Ovary (tissue), 10 donors: ENCODE measurements at regions of chr9 and their contacts with region 1.

Region 1: GRCh38 chr9:13467157-13467556 is 187.7 kb upstream of the MPDZ start:
- DNase-seq: no peak
- H3K4me3 ChIP-seq: no peak overlapping the region
- H3K27ac ChIP-seq: no peak overlapping the region
- H3K4me1 ChIP-seq: peaks cover 1% of the 10 kb centered on the region
- H3K27me3 ChIP-seq: no peaks in the 10 kb centered on the region
- CTCF ChIP-seq: no peak
- EP300 ChIP-seq: no peak
- POLR2A ChIP-seq: no peak

Region 2: GRCh38 chr9:12993466-12993865 is 473.7 kb before region 1 on chr9:
- intact Hi-C with region 1: no loop called
- DNase-seq: no peak
- H3K4me3 ChIP-seq: no peak overlapping the region
- H3K27ac ChIP-seq: no peak overlapping the region
- H3K4me1 ChIP-seq: no peaks in the 10 kb centered on the region
- H3K27me3 ChIP-seq: no peaks in the 10 kb centered on the region
- CTCF ChIP-seq: no peak
- EP300 ChIP-seq: no peak
- POLR2A ChIP-seq: no peak

Region 3: DNA sequence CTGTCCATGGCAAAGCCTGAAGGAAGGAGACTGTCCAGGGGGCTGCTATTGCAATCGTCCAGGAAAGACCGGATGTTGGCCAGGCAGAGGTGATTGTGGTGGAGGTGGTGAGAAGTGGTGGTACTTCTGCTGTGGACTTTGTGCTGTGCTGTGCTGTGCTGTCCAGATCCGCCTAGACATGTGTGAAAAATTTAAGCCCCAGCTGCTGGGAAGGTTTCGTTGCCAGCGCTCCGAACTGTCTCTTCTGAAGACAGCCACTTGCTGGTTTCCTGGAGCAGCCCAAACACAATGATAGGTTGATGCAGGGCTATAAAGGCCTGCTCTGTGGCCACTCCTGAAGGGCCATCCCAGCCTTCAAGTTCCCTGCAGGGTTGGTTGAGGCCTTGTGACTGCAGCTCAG is 35.3 kb after region 1 on chr9:
- intact Hi-C with region 1: no loop called
- DNase-seq: no peak
- H3K4me3 ChIP-seq: no peak overlapping the region
- H3K27ac ChIP-seq: no peak overlapping the region
- H3K4me1 ChIP-seq: no peaks in the 10 kb centered on the region
- H3K27me3 ChIP-seq: no peaks in the 10 kb centered on the region
- CTCF ChIP-seq: no peak
- EP300 ChIP-seq: no peak
- POLR2A ChIP-seq: no peak

Region 4: GRCh38 chr9:13513716-13514444 is 46.7 kb after region 1 on chr9:
- intact Hi-C with region 1: loop called in 1 of 4 experiments (anchors 1 kb)
- DNase-seq: no peak
- H3K4me3 ChIP-seq: no peak overlapping the region
- H3K27ac ChIP-seq: no peak overlapping the region
- H3K4me1 ChIP-seq: peaks cover 3% of the 10 kb centered on the region
- H3K27me3 ChIP-seq: no peaks in the 10 kb centered on the region
- CTCF ChIP-seq: no peak
- EP300 ChIP-seq: no peak
- POLR2A ChIP-seq: no peak

Region 5: GRCh38 chr9:13823026-13823425 is 355.9 kb after region 1 on chr9:
- intact Hi-C with region 1: no loop called
- DNase-seq: no peak
- H3K4me3 ChIP-seq: no peak overlapping the region
- H3K27ac ChIP-seq: no peak overlapping the region
- H3K4me1 ChIP-seq: no peaks in the 10 kb centered on the region
- H3K27me3 ChIP-seq: no peaks in the 10 kb centered on the region
- CTCF ChIP-seq: no peak
- EP300 ChIP-seq: no peak
- POLR2A ChIP-seq: no peak